Activated B cell treated with CpG ODN at 0.5 μM for 24 hours (primary cell): ENCODE measurements at regions of chr9 and their contacts with region 1.

Region 1: DNA sequence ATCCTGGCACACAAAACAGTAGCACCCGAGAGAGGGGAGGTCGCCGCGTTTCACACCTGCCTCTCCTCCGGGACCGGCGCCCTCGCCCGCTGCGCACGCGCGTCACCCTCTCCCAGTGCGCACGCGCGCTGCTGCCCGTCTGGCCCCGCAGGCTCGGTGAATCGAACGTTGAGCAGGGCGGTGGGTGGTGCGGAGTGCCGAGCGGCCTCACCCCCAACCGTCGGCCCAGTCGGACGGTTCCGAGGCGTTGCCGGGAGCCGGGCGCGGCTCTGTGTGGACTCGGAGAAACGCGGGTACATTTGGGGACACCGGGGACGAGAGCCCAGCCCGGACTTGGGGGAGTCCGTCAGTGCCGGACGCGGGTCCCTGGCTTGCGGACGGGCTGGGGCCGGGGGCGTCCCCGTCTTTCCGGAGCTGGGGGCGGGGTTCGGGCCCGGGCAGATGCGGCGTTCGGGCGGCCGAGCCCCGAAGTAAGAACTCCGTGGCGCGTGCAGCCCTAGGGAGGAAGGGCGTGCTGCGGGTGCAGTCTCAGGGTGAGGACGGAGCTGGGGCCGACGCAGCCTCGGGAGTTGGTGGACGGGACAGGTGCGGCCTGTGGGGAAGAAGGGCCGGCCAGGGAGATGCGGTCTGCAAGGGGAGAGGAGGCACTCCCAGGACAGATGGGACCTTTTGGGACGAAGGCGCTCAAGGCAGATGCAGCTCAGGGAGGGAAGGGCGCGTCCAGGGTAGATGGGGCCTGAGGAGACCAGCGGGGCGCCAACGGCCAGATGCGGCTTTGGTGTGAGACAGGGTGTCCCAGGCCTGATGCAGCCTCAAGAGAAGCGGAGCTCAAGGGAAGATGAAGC is at the start of gene POMT1:
- DNase-seq: peak; percentile 89
- ATAC-seq: peak; percentile 87
- H3K4me3 Mint-ChIP-seq: peak within 1 kb of the TSS; percentile 90
- H3K27ac Mint-ChIP-seq: peak within 1 kb of the TSS; percentile 72
- H3K4me1 Mint-ChIP-seq: peaks cover 25% of the 10 kb centered on the region
- H3K27me3 Mint-ChIP-seq: no peaks in the 10 kb centered on the region
- CTCF ChIP-seq: no peak
- total RNA-seq, gene POMT1: 24.9 and 29.8 TPM in 2 replicates

Region 2: GRCh38 chr9:131370638-131371037 is 132.4 kb before region 1 on chr9:
- CTCF ChIA-PET with region 1: no interaction called
- POLR2A ChIA-PET with region 1: interaction called, 14 read pairs
- intact Hi-C with region 1: no loop called
- DNase-seq: no peak
- ATAC-seq: no peak
- H3K4me3 Mint-ChIP-seq: no peak overlapping the region
- H3K27ac Mint-ChIP-seq: no peak overlapping the region
- H3K4me1 Mint-ChIP-seq: peaks cover 22% of the 10 kb centered on the region
- H3K27me3 Mint-ChIP-seq: no peaks in the 10 kb centered on the region
- CTCF ChIP-seq: no peak

Region 3: GRCh38 chr9:131530920-131531832 is 28.2 kb after region 1 on chr9 and contains the start of gene UCK1:
- CTCF ChIA-PET with region 1: no interaction called
- POLR2A ChIA-PET with region 1: interaction called, 15 read pairs
- intact Hi-C with region 1: loop called (anchors 2 kb)
- DNase-seq: peak; percentile 73
- ATAC-seq: peak; percentile 88
- H3K4me3 Mint-ChIP-seq: peak within 1 kb of the TSS; percentile 79
- H3K27ac Mint-ChIP-seq: no peak within 1 kb of the TSS
- H3K4me1 Mint-ChIP-seq: peaks cover 22% of the 10 kb centered on the region
- H3K27me3 Mint-ChIP-seq: no peaks in the 10 kb centered on the region
- CTCF ChIP-seq: no peak
- total RNA-seq, gene UCK1: 19.1 and 30.4 TPM in 2 replicates

Region 4: DNA sequence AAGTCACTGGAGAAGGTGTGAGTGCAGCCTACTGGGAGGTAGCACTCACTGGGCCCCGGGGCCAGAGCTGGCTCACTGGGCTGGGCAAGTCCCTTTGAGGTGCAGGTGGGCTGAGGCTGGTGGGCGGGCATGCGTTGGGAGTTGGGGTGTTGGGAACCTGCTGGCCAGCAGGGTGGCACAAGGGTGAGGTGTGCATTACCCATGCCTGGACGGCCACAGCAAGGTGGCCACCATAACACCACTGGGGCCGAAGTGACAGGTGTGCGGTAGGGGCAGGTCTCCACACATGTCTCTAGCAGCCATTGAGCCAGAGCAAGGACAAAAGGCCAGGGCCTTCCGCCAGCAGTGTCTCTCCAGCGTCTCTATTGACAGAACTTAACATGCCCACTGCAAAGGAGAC is 64.9 kb after region 1 on chr9:
- CTCF ChIA-PET with region 1: no interaction called
- POLR2A ChIA-PET with region 1: interaction called, 13 read pairs
- intact Hi-C with region 1: no loop called
- DNase-seq: no peak
- ATAC-seq: no peak
- H3K4me3 Mint-ChIP-seq: no peak overlapping the region
- H3K27ac Mint-ChIP-seq: peak overlapping the region; percentile 33
- H3K4me1 Mint-ChIP-seq: no peaks in the 10 kb centered on the region
- H3K27me3 Mint-ChIP-seq: no peaks in the 10 kb centered on the region
- CTCF ChIP-seq: no peak

Region 5: DNA sequence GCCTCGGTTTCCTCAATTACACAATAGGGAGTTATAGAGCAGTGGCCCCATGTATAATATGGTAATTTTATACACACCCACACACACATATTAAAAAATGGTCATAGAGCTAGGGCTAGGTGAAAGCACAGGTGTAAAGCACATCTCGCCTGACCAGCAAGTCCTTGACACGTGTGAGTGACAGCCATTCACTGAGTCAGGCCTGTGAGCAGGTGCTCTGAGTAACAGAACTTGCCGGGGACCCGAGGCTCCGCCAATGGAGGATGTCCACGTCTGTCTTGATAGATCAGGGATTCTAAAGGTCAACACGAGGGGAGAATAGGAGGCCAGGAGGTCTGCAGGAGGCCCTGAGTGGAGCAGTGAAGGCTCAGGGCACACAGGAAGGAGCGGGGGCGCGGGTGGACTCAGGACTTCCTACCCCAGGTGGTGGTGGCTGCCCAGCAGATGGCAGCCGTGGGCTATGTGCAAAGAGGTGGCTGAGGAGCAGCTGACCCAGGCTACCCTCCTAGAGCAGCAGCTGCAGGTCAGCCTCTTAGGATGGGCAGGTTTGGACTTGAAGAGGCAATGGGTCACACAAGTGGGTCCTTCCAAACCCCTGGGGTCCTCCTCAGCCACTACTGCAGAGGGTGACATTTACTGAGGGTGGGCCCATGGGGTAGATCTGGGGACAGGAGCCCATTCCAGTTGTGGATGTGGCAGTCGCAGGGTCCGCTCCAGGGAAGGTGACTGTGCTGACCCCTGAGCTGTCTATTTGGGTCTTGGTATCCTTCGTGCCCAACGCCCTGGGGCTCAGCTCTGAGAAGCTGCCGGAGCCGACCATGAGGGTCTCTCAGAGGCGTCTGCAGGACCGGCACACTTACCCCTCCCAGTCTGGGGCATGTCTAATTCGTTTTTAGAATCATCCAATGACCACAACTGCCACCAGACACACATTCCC is 88.2 kb after region 1 on chr9:
- CTCF ChIA-PET with region 1: no interaction called
- POLR2A ChIA-PET with region 1: no interaction called
- intact Hi-C with region 1: loop called (anchors 2 kb)
- DNase-seq: peak; percentile 67
- ATAC-seq: peak; percentile 88
- H3K4me3 Mint-ChIP-seq: no peak overlapping the region
- H3K27ac Mint-ChIP-seq: peak overlapping the region; percentile 51
- H3K4me1 Mint-ChIP-seq: peaks cover 34% of the 10 kb centered on the region
- H3K27me3 Mint-ChIP-seq: no peaks in the 10 kb centered on the region
- CTCF ChIP-seq: no peak

Region 6: DNA sequence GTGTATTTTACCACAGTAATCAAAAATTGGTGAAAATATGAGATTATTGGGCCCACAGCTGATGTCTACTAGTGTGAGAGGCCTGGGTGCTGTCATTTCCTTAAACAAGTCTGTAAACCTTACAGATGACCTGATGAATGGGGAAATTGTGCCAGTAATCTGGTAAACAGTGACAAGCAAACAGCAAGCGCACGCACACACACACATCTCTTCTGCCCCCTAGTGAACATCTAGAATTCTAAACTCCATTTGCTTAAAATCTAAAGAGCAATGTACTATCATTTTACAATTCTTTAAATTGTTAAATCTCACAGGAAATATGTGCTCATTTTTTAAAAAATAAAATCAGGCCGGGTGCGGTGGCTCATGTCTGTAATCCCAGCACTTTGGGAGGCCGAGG is 244.4 kb after region 1 on chr9:
- CTCF ChIA-PET with region 1: no interaction called
- POLR2A ChIA-PET with region 1: no interaction called
- intact Hi-C with region 1: loop called (anchors 2 kb)
- DNase-seq: no peak
- ATAC-seq: peak; percentile 55
- H3K4me3 Mint-ChIP-seq: no peak overlapping the region
- H3K27ac Mint-ChIP-seq: no peak overlapping the region
- H3K4me1 Mint-ChIP-seq: peaks cover 27% of the 10 kb centered on the region
- H3K27me3 Mint-ChIP-seq: no peaks in the 10 kb centered on the region
- CTCF ChIP-seq: no peak

Region 7: GRCh38 chr9:131915181-131915580 is 412.2 kb after region 1 on chr9:
- CTCF ChIA-PET with region 1: no interaction called
- POLR2A ChIA-PET with region 1: no interaction called
- intact Hi-C with region 1: no loop called
- DNase-seq: no peak
- ATAC-seq: no peak
- H3K4me3 Mint-ChIP-seq: no peak overlapping the region
- H3K27ac Mint-ChIP-seq: no peak overlapping the region
- H3K4me1 Mint-ChIP-seq: no peaks in the 10 kb centered on the region
- H3K27me3 Mint-ChIP-seq: no peaks in the 10 kb centered on the region
- CTCF ChIP-seq: no peak